Heart right ventricle (tissue), 16 donors: ENCODE measurements at regions of chr2 and their contacts with region 1.

Region 1: GRCh38 chr2:112811841-112812306 is 24.7 kb downstream of the IL1B start:
- DNase-seq: peak in 1 of 2 donors; percentile 63
- ATAC-seq: peak; percentile 83 to 96 (median 88)
- H3K4me3 ChIP-seq: no peak overlapping the region
- H3K27ac ChIP-seq: peak overlapping the region in 7 of 10 donors; percentile 5 to 69 (median 41)
- H3K4me1 ChIP-seq: peaks cover 0 to 35% (median 27%) of the 10 kb centered on the region in 9 donors
- H3K27me3 ChIP-seq: no peaks in the 10 kb centered on the region
- CTCF ChIP-seq: no peak

Region 2: DNA sequence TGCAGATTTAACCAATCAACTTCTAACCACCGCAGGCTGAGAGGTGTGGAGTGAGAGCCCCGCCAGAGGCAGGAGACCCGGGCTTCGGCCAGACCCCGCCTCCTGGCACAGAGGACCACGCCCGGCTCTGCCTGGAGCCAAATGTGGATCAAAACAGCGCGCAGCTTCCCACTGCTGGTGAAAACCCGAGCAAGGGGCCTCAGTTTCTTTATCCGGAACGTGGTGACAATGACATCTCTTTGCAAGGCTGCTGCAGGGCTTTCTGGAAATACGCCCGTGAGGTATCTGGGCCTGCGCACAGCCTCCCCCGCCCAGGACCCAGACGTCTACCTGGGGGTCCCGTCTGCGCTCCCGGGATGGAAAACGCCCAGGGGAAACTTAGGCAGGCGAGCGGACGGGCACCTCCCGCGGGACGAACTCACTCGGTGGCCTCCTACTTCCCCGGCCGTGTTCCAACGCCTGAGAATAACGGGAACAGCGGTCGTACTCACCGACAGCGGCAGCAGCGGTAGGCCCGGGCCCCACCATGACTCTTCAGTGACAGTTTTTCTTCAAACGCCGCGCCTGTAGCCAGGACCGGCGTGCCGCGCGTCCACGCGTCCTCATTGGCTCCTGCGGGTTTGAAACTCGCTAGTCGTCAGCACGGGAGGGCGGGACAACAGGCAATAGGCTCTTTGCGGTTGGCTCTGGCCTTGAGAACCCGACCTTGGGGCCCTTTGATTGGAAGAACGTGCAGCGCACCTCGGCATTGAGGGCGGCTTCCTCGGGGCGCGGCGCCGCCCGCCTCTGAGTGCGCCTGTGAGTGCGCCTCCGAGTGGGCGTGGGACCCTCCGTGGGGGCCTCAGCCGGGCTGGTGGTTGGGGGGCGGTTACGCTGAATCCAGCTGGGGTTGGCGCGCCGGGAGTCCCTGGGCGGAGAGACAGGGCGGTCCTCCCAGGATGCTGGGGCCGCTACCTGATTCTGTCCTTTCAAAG is 47.5 kb before region 1 on chr2 and contains the start of gene CKAP2L:
- intact Hi-C with region 1: loop called in 2 of 10 experiments (anchors 5 kb)
- DNase-seq: peak; percentile 93 to 97
- ATAC-seq: peak; percentile 99 to 100 (median 100)
- H3K4me3 ChIP-seq: peak within 1 kb of the TSS; percentile 40 to 87 (median 72)
- H3K27ac ChIP-seq: peak within 1 kb of the TSS in 5 of 10 donors; percentile 28 to 70 (median 39)
- H3K4me1 ChIP-seq: peaks cover 0 to 37% (median 14%) of the 10 kb centered on the region in 9 donors
- H3K27me3 ChIP-seq: no peaks in the 10 kb centered on the region
- CTCF ChIP-seq: peak in 1 of 9 donors; percentile 8
- total RNA-seq, gene CKAP2L: 0.34 to 1.8 (median 0.45) TPM in 6 of 10 donors, not detected in the others

Region 3: DNA sequence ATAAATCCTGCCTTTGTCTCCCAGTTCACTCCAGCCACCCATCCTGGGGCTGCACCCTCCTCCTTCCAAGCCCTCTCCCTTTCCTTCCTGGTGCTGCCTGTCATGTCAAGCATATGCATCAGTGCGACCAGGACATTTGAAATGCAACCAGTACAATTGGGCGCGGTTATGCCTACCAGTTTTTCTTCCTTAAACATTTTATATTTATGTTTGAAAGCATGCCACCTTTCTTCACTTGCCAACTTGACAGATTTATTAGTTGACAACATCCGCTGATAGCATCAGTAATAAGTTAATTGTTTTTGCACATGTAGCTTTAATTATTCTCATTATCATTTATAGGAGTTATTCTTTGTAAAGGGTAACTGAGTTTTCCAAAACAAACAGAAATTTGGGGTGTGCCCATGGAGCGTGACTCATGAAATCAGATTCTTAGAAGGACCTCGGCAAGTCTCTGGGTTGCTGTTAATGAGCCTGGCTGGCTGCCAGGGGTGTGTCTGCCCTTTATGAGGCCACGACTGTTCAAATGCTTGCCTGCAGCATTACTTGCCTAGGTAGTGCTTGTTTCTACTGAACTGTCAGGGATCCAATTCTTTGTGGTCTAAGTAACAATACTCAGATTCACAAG is 57.5 kb after region 1 on chr2:
- intact Hi-C with region 1: loop called in 2 of 10 experiments (anchors 2 to 5 kb)
- DNase-seq: peak; percentile 70 to 73
- ATAC-seq: peak; percentile 41 to 94 (median 90)
- H3K4me3 ChIP-seq: no peak overlapping the region
- H3K27ac ChIP-seq: no peak overlapping the region
- H3K4me1 ChIP-seq: peaks cover 0 to 19% (median 8%) of the 10 kb centered on the region in 9 donors
- H3K27me3 ChIP-seq: peaks cover 0 to 50% (median 18%) of the 10 kb centered on the region in 7 donors
- CTCF ChIP-seq: no peak